H1 (cell line): ENCODE measurements at regions of chr17 and their contacts with region 1.

Region 1: GRCh38 chr17:59311130-59311920 is 20.1 kb upstream of the YPEL2 start:
- DNase-seq: no peak
- H3K4me3 ChIP-seq: no peak overlapping the region
- H3K27ac ChIP-seq: no peak overlapping the region
- H3K4me1 ChIP-seq: no peaks in the 10 kb centered on the region
- H3K27me3 ChIP-seq: no peaks in the 10 kb centered on the region
- CTCF ChIP-seq: peak in 2 of 3 experiments; percentile 77 to 86; a peak in 3 of 4 replicates
- EP300 ChIP-seq: no peak
- POLR2A ChIP-seq: no peak
- RAD21 ChIP-seq: peak; percentile 93 to 95

Region 2: GRCh38 chr17:59199398-59199797 is 111.9 kb before region 1 on chr17:
- CTCF ChIA-PET with region 1: no interaction called
- POLR2A ChIA-PET with region 1: no interaction called
- DNase-seq: no peak
- H3K4me3 ChIP-seq: no peak overlapping the region
- H3K27ac ChIP-seq: no peak overlapping the region
- H3K4me1 ChIP-seq: no peaks in the 10 kb centered on the region
- H3K27me3 ChIP-seq: no peaks in the 10 kb centered on the region
- CTCF ChIP-seq: no peak
- EP300 ChIP-seq: no peak
- POLR2A ChIP-seq: no peak
- RAD21 ChIP-seq: no peak

Region 3: GRCh38 chr17:59428896-59429485 is 117.7 kb after region 1 on chr17:
- CTCF ChIA-PET with region 1: interaction called, 299 read pairs
- POLR2A ChIA-PET with region 1: no interaction called
- DNase-seq: no peak
- H3K4me3 ChIP-seq: no peak overlapping the region
- H3K27ac ChIP-seq: no peak overlapping the region
- H3K4me1 ChIP-seq: peaks cover 0 to 9% (median 6%) of the 10 kb centered on the region in 4 experiments; a peak in 3 of 7 replicates
- H3K27me3 ChIP-seq: no peaks in the 10 kb centered on the region
- CTCF ChIP-seq: no peak
- EP300 ChIP-seq: no peak
- POLR2A ChIP-seq: no peak
- RAD21 ChIP-seq: no peak

Region 4: GRCh38 chr17:59464246-59464645 is 152.9 kb after region 1 on chr17:
- CTCF ChIA-PET with region 1: interaction called, 15 read pairs
- POLR2A ChIA-PET with region 1: no interaction called
- DNase-seq: no peak
- H3K4me3 ChIP-seq: no peak overlapping the region
- H3K27ac ChIP-seq: no peak overlapping the region
- H3K4me1 ChIP-seq: no peaks in the 10 kb centered on the region
- H3K27me3 ChIP-seq: no peaks in the 10 kb centered on the region
- CTCF ChIP-seq: no peak
- EP300 ChIP-seq: no peak
- POLR2A ChIP-seq: no peak
- RAD21 ChIP-seq: no peak